ENCODE measurements at regions of chr2 and their contacts with region 1.

Region 1: DNA sequence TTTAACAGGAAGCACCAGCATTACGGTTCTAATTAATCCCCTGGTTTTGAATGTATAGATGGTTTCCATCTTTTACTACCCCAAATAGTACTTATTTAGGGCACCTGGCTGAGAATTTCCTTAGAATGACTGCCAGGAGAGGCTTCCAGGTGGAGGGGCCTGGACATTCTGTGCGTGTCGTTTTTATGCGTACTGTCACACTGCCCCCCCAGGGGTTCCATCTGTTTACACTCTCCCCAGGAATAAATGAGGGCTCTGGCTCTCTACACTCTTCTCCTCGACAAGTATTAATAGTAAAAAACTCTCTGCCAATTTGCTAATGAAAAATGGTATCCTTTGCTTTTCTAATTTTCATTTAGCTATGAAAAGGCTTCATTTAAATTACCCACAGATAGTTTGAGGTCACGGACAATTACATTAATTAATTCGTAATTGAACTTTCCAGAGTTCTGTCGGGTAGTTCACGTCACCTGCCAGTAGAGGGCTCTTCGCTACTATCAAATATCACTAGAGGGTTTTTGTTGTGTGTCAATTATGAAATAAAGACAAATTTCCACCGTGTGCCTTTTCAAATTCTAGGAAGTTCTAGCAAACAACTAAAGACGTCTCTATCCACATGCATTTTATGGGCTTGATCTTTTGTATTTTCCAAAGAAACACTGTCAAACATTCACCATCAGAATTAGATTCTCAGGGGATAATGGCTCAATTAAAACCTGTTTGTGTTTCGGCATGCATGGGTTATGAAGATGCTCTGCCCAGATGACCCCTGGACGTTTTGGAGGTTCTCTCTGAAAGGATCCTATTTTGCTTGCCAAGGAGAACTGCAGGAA is 88.8 kb upstream of the ASB18 start:
- DNase-seq: no peak
- ATAC-seq: no peak
- H3K4me3 ChIP-seq: no peak overlapping the region
- H3K27ac ChIP-seq: no peak overlapping the region
- H3K4me1 ChIP-seq: no peaks in the 10 kb centered on the region
- H3K27me3 ChIP-seq: no peaks in the 10 kb centered on the region
- CTCF ChIP-seq: peak; percentile 66 to 85 (median 74)
- POLR2A ChIP-seq: no peak

Region 2: GRCh38 chr2:236224501-236224900 is 128.5 kb before region 1 on chr2:
- in situ Hi-C with region 1: no loop called
- intact Hi-C with region 1: no loop called
- DNase-seq: no peak
- ATAC-seq: no peak
- H3K4me3 ChIP-seq: no peak overlapping the region
- H3K27ac ChIP-seq: no peak overlapping the region
- H3K4me1 ChIP-seq: no peaks in the 10 kb centered on the region
- H3K27me3 ChIP-seq: peaks cover 0 to 4% (median 0%) of the 10 kb centered on the region in 3 donors
- CTCF ChIP-seq: no peak
- POLR2A ChIP-seq: no peak

Region 3: DNA sequence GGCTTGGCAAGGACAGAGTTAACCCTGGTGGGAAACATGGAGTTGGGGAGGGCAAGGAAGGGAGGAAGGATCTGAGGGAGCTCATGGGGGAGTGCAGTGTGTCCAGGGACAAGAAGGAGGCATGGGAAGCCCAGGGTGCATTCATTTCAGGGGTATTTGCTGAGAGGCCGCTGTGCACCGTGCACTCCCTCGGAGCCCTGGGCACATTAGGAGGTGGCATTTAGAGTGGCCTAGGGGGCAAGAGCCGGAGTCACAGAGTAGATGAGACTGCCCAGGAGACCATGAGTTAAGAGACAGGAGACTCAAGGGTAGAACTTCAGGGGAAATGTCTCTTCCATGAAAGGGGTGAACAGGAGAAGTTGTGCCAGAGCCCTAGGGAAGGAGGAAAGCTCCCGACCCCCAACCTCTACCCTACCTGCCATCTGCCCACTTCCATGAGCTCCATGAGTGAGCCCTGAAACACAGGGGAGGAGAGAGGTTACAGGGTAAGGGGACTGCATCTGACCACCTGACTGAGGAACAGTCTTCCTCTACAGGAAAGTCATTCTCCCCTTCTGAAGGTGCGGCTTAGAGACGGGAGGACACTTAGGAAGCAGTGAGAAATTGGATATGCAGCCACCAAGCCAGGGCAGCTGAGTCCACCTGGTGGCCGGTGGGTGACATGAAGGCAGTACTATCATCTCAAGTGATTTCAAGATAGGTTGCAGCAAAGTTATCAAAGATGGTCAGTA is 674.2 kb after region 1 on chr2:
- in situ Hi-C with region 1: loop called in 1 of 4 experiments (anchors 10 kb)
- intact Hi-C with region 1: loop called (anchors 1 kb)
- DNase-seq: peak; percentile 54 to 73
- ATAC-seq: peak; percentile 69 to 88
- H3K4me3 ChIP-seq: no peak overlapping the region
- H3K27ac ChIP-seq: no peak overlapping the region
- H3K4me1 ChIP-seq: no peaks in the 10 kb centered on the region
- H3K27me3 ChIP-seq: no peaks in the 10 kb centered on the region
- CTCF ChIP-seq: peak; percentile 81 to 91 (median 83)
- POLR2A ChIP-seq: no peak

Region 4: GRCh38 chr2:237060534-237061312 is 707.7 kb after region 1 on chr2:
- in situ Hi-C with region 1: loop called in 1 of 4 experiments (anchors 5 kb)
- intact Hi-C with region 1: loop called (anchors 1 kb)
- DNase-seq: no peak
- ATAC-seq: peak; percentile 70 to 74
- H3K4me3 ChIP-seq: no peak overlapping the region
- H3K27ac ChIP-seq: no peak overlapping the region
- H3K4me1 ChIP-seq: peaks cover 0 to 2% of the 10 kb centered on the region in 2 donors
- H3K27me3 ChIP-seq: no peaks in the 10 kb centered on the region
- CTCF ChIP-seq: peak; percentile 49 to 65 (median 58)
- POLR2A ChIP-seq: no peak

Measured in gastrocnemius medialis (tissue), 4 donors.